ENCODE measurements at regions of chr20 and their contacts with region 1.

Region 1: DNA sequence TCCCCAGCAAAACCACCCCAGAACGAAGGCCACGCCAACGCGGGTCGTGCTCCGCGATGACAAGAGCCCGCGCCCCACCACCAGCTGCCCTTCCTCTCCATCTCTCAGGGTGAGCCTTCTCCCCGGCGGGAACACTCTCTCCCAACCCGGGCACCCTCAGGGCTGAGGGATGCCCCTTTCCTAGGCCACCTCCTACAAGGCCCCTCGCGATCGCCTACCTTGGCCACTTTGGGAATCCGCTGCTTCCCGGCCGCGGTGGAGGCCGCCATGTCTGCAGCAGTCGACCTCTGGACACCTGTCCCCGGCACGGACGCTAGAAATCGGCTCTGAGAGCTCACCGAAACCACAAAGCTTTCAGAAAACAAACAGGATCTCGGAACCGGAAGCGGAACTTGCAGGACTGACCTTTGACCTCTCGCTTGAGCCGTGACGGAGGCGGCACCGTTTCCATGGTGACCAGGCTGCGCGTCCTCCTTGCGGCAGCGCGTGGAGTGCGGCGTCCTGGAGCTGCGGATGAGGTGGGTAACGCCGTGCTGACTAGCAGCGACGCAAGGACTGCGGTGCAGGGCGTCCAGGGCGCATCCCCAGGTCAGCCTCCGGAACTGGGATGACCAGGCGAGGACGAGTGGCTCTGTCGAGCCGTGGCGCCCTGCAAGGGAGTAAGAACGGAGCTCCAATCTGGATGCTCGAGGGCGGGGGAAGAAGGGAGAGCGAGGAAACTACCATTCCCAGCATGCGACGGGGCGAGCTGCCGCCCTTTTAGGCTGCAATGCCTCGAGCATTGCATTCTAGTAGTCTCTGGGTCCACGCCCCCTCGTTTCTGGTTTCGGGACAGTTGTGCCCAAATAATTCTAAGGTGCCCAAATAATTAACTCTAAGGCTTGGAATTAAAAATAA is at the starts of genes CFAP61 and CRNKL1:
- DNase-seq: peak; percentile 98
- H3K4me3 ChIP-seq: peak within 1 kb of the TSS; percentile 78 to 94 (median 91)
- H3K27ac ChIP-seq: peak within 1 kb of the TSS; percentile 77 to 87 (median 84)
- H3K4me1 ChIP-seq: peaks cover 0 to 19% (median 16%) of the 10 kb centered on the region in 4 donors
- H3K27me3 ChIP-seq: no peaks in the 10 kb centered on the region
- CTCF ChIP-seq: peak in 1 of 4 experiments; percentile 8
- EP300 ChIP-seq: no peak
- POLR2A ChIP-seq: no peak
- total RNA-seq, gene CFAP61: 0.27 to 2.0 TPM in 2 of 4 donors, not detected in the others
- total RNA-seq, gene CRNKL1: 19.9 to 29.1 (median 25.7) TPM

Region 2: GRCh38 chr20:18793625-18794427 is 1258.5 kb before region 1 on chr20:
- intact Hi-C with region 1: loop called (anchors 10 kb)
- DNase-seq: peak; percentile 94
- H3K4me3 ChIP-seq: peak overlapping the region; percentile 60 to 79 (median 66)
- H3K27ac ChIP-seq: peak overlapping the region; percentile 86 to 89 (median 88)
- H3K4me1 ChIP-seq: peaks cover 0 to 15% (median 9%) of the 10 kb centered on the region in 4 donors
- H3K27me3 ChIP-seq: no peaks in the 10 kb centered on the region
- CTCF ChIP-seq: no peak
- EP300 ChIP-seq: peak in 1 of 4 donors; percentile 14
- POLR2A ChIP-seq: peak; percentile 58 to 65

Region 3: GRCh38 chr20:20017844-20018185 is 34.5 kb before region 1 on chr20:
- intact Hi-C with region 1: loop called (anchors 2 kb)
- DNase-seq: no peak
- H3K4me3 ChIP-seq: peak overlapping the region; percentile 65 to 95 (median 86)
- H3K27ac ChIP-seq: peak overlapping the region; percentile 75 to 84 (median 80)
- H3K4me1 ChIP-seq: peaks cover 0 to 45% (median 39%) of the 10 kb centered on the region in 4 donors
- H3K27me3 ChIP-seq: no peaks in the 10 kb centered on the region
- CTCF ChIP-seq: no peak
- EP300 ChIP-seq: no peak
- POLR2A ChIP-seq: no peak

Measured in sigmoid colon (tissue), 7 donors.